GM18951 (cell line): ENCODE measurements at regions of chr7 and their contacts with region 1.

Region 1: DNA sequence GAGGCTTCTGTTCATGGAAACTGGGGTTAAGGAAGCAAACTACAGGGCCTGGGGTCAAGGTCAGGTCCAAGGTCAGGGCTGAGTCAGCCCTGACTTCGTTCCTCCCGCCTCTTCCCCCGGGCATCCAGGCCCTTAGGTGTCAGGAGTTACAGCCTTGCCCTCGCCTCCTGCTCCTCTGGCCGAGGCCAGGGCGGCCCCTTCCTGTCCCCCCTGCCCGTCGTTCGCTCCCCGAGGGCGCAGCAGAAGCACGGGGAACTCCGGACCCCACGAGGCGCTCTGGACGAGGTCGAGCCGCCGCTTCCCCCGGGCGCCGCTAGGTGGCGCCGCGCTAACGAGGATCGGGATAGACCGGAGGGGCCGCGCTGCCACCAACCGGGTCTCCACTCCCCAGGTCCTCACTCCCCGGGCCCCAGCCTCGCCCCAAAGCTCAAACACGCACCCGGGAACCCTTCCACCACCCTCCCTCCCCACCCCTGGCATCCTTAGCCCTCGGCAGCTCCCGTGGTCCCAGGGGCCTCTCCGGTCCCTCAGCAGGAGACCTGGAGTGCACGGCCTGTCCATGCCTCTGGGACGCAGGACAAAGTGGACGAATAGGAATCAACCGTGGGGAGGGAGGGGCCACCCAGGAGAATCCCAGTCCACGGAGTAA is 59.2 kb upstream of the MYL10 start:
- POLR2A ChIP-seq: no peak

Region 2: DNA sequence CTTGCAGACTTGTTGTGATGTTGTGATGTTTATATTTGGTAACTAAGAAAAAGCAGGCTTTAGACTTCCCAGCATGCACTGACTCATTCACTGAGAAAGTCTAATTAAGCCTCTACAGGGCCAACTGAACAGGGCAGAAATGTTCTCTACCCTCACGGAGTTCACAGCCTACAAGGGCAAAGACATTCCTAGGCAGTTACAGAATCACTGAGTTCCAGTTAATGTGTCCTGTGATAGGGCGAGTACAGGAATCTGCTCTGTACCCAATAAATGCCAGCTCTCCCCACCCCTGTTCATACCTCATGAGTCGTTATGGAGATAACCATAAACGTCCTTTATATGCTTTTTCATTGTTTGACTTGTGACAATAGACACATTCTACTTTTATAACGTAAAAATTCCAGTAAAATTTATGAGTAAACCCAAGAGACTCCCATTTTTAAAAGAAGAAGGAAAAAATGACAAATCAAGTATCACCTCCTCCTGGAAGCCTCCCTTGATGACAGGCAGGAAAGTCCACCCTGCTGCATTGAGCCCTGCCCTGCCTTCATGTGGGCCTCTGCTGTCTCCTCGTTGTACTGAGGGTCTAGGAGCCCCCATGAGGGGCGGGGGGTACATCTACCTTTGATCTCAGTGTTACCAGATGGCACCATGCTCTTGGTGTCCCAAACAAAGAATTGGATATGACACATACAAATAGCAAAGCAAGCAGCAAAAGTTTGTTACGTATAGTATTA is 704.7 kb before region 1 on chr7:
- in situ Hi-C with region 1: no loop called
- POLR2A ChIP-seq: no peak

Region 3: GRCh38 chr7:101126651-101127280 is 561.5 kb before region 1 on chr7 and contains the start of gene SERPINE1:
- in situ Hi-C with region 1: no loop called
- POLR2A ChIP-seq: peak; percentile 37

Region 4: DNA sequence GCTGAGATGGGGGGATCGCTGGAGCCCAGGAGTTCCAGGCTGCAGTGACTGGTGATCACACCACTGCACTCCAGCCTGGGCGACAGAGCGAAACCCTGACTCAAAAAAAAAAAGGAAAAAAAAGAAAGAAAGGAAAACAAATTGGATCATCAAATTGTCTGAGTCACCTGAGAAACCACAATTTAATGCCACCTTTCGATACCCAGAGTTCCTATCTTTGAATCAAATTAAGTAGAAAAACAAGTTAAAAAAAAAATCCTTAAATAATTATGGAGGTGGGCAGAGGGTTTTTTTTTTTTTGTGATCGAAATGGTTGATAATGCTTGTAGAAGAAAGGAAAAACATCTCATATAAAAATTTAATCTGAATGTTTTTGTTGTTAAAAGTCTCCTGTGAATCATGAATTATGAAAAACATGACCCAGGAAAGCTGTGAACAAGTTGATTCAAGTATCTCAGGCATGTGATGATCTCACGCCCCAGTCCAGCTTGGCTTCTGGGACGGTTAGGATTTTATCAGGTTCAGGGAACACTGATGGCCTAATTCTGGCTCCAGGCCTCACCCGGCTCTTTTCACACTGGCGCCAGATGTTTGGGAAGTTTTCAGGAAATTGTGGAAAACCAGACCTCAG is 103.9 kb after region 1 on chr7:
- in situ Hi-C with region 1: loop called (anchors 10 kb)
- POLR2A ChIP-seq: no peak

Region 5: GRCh38 chr7:102175423-102176170 is 487.3 kb after region 1 on chr7:
- in situ Hi-C with region 1: no loop called
- POLR2A ChIP-seq: no peak

Region 6: DNA sequence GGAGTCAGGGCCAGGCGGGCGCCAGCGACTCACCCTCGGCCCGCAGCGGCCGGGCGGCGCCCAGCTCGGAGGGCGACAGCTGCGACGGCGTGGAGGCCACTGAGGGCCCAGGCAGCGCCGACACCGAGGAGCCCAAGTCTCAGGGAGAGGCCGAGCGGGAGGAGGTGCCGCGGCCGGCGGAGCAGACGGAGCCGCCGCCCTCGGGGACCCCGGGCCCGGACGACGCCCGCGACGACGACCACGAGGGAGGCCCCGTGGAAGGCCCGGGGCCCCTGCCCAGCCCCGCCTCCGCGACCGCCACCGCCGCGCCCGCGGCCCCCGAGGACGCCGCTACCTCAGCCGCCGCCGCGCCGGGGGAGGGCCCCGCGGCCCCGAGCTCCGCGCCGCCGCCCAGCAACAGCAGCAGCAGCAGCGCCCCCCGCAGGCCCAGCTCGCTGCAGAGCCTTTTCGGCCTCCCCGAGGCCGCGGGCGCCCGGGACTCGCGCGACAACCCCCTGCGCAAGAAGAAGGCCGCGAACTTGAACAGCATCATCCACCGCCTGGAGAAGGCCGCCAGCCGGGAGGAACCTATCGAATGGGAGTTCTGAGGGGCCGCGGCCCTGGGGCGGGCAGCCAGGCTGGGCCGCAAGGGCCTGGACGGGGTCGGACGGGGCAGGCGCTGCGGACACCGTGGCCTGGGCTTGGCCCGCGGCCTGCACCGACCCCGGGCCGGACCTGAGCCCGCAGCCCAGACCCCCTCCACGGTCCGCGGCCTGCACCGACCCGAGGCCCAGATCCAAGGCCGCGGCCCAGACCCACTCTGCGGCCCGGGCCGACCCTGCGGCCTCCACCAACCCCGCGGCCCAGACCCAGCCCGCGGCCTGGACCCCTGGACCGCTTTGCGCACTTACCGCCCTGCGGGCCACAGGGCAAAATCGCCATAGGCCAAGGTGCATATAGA is 560.4 kb after region 1 on chr7:
- in situ Hi-C with region 1: loop called (anchors 10 kb)
- POLR2A ChIP-seq: no peak